Posterior cingulate gyrus (tissue), 11 donors: ENCODE measurements at regions of chr11 and their contacts with region 1.

Region 1: GRCh38 chr11:78416305-78417178 is 1.1 kb downstream of the GAB2 start:
- DNase-seq: peak; percentile 69 to 97 (median 85)

Region 2: GRCh38 chr11:78227921-78228320 is 188.6 kb before region 1 on chr11:
- intact Hi-C with region 1: loop called (anchors 1 kb)
- DNase-seq: no peak

Region 3: DNA sequence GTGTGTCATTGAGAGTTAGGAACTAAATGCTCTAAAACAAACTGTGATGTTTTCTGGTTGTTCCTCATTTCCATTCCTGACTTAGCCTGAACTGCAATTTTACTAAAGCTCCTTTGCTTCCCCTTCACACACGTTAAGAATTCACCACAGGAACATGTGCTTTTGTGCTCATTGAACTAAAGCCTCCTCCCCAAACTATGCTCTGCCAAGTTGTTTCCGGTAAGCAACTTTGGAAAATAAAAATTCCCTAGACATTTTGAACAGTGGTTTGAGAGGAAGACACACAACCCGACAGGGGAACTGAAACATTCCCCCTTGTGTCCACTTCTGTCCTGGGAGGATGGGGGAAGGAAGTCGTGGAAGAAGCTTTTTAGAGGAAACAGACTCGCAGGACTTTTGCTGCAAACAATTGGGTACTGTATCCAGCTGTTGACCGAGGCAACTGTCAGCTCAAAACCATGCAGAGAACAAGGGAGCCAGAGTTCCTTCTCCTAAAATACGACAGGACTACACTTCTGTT is 65.8 kb before region 1 on chr11:
- intact Hi-C with region 1: loop called (anchors 5 kb)
- DNase-seq: peak in 2 of 10 donors; percentile 46 to 82

Region 4: DNA sequence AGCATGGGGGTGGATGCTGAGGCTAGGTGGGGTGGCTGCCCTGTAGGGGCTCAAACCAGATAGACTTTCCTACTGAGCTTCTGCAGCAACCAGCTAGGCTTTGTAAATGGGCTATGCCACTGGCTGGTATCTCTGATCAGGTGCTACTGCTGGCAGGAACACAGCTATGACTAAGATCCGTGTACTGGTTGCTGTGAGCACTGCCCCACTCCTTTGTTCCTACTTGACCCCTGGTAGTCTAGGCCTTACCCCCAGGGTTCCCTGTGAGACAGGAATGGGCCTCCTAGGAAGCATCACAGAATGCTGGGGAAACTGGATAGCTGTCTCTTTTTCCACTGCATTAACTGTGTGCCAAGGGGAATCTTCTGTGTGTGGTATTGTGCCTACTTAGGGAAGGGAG is 59.5 kb after region 1 on chr11:
- intact Hi-C with region 1: no loop called
- DNase-seq: peak in 1 of 10 donors; percentile 46

Region 5: DNA sequence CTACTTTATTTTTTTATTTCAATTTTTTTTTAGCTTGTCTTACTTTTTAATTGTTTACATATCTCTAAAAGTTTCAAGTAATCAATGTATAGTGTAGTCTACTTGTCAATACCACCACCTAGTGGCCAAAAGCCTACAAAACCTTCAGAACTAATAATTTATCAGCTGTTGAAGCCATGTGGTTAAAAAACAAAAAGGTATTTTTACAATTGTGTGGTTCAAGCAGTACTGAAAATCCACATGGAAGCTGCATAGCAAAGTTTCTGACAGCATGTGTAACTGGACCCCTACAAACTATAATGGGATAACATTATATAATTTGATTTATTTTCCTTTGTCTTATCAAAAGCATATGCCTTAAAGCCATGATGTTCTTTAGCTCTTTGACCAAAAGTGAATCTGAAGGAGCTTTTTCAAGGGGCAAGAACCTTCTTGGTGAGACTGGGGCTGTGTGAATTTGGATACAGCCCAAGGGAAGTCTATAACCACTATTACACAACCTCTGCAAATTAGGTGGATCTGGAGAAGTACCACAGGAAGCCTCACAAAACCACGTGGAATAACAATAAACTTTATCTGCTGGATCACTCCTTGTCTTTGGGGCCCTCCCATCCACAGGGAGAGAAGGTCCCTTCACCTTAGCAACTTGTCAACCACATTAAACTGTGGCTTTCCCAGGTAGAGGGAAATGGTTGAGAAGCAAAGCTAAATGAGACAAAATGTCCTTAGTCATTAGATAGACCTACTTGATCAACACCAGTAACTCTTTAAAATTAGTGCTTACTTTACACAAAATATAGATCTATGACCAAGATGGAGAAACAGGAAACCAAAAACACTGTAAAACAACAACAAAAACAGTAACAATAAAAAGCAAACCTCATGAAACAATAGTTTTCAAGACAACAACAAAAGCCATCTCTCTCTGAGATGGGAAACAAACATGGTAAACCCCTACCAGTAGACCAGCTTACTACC is 148.2 kb after region 1 on chr11:
- intact Hi-C with region 1: loop called (anchors 5 kb)
- DNase-seq: peak in 1 of 10 donors; percentile 13

Region 6: DNA sequence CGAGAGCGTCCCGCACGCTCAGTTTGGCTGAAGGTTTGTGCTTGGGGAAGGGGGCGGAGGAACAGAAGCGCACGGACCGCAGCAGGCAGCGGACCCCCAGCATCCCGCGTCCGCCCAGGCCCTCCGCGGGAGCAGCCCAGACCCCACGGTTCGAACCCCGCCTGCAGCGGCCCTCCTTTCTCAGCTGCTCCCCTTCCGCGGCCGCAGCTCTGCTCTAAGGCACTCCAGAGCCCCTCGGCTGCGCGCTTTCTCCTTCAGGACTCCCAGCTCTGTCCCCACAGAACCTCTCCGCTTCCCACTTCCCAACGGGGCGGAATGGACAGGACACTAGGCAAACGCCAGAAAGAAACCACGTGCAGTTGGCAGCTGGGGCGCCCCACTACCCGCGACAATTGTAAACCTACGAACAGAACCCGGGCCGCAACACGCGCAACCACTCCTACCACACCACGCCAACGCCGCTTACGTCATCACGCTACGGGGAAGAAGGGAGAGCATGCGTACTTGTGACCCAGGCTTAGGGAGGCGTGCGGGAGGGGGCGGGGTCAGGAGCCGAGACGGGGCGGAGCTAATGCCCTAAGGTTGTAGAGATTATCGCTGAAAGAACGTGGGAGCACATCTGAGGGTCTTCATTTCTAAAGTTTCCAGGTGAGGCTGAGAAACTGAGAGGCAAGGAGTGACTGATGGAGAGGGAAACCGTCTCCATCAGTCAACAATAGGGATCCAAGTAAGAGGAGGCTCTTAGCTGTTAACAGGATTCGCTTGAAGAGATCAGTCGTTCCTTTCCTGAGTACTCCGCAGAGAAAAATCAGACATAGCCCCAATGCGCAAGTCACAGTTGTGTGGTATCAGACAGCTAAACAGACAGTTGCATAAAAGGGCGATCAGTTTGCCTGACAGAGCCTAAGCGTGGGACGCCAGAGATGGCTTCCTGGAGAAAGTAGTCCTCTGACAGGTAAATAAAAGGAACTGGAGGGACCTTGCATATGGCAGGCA is 158.1 kb after region 1 on chr11 and contains the start of gene NARS2:
- intact Hi-C with region 1: loop called (anchors 5 kb)
- DNase-seq: peak; percentile 91 to 99 (median 96)